H1 (cell line): ENCODE measurements at regions of chr2 and their contacts with region 1.

Region 1: DNA sequence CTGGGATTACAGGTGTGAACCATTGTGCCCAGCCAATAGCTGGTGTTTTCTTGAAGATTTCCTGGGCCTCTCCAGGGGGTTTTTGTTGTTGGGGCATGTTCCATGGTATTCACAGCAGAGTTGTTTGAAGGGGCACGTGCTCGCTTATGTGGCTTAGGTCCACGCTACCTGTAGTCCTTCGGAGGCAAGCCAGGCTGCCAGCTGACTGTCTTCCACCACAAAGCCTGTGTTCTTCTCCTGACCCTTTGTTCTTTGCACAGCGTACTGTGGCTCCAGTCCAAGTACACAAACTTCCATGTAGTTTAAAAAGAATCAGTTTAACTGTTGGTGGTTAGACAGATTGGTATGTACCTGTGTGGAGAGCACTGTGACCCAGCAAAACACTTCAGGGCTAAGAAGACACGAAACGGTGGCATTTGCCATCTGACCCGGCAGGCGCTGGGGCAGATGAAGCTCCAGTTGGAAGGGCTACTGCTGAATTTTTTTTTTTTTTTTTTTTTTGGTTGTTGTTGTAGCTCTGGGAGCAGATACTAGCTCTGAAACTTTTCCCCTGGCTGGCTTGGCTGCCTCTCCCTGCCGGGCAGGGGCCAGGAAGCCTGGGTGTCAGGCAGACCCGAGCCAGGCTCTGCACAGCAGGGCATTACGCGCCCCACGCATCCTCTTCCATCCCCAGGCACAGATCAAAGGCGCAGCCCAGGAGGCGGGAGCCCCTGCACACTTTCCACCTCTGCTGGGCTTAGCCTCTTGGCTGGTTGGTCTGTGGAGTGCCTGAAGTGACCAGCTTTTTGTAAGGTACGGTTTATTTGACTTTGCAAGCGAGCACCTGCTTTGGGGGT is 5.7 kb downstream of the GREB1 start:
- DNase-seq: no peak
- H3K4me3 ChIP-seq: no peak overlapping the region
- H3K27ac ChIP-seq: no peak overlapping the region
- H3K4me1 ChIP-seq: peaks cover 13 to 38% (median 28%) of the 10 kb centered on the region in 4 experiments
- H3K27me3 ChIP-seq: no peaks in the 10 kb centered on the region
- CTCF ChIP-seq: no peak
- EP300 ChIP-seq: no peak
- POLR2A ChIP-seq: no peak
- RAD21 ChIP-seq: no peak

Region 2: GRCh38 chr2:11368059-11368572 is 171.4 kb before region 1 on chr2:
- CTCF ChIA-PET with region 1: no interaction called
- POLR2A ChIA-PET with region 1: no interaction called
- DNase-seq: no peak
- H3K4me3 ChIP-seq: no peak overlapping the region
- H3K27ac ChIP-seq: no peak overlapping the region
- H3K4me1 ChIP-seq: 0 out of 7 replicates have a peak, but pooled peaks cover 0 to 3% (median 0%) of the 10 kb centered on the region in 4 experiments
- H3K27me3 ChIP-seq: no peaks in the 10 kb centered on the region
- CTCF ChIP-seq: no peak
- EP300 ChIP-seq: no peak
- POLR2A ChIP-seq: no peak
- RAD21 ChIP-seq: no peak

Region 3: GRCh38 chr2:11477994-11478393 is 61.5 kb before region 1 on chr2:
- CTCF ChIA-PET with region 1: interaction called, 15 read pairs
- POLR2A ChIA-PET with region 1: no interaction called
- DNase-seq: peak in 1 of 2 experiments; percentile 95
- H3K4me3 ChIP-seq: no peak overlapping the region
- H3K27ac ChIP-seq: no peak overlapping the region
- H3K4me1 ChIP-seq: peaks cover 0 to 3% (median under 1%) of the 10 kb centered on the region in 4 experiments; a peak in 3 of 7 replicates
- H3K27me3 ChIP-seq: peaks cover 0 to 16% (median 12%) of the 10 kb centered on the region in 4 experiments; a peak in 6 of 7 replicates
- CTCF ChIP-seq: peak; percentile 45 to 90 (median 78)
- EP300 ChIP-seq: no peak
- POLR2A ChIP-seq: no peak
- RAD21 ChIP-seq: peak; percentile 86 to 90

Region 4: DNA sequence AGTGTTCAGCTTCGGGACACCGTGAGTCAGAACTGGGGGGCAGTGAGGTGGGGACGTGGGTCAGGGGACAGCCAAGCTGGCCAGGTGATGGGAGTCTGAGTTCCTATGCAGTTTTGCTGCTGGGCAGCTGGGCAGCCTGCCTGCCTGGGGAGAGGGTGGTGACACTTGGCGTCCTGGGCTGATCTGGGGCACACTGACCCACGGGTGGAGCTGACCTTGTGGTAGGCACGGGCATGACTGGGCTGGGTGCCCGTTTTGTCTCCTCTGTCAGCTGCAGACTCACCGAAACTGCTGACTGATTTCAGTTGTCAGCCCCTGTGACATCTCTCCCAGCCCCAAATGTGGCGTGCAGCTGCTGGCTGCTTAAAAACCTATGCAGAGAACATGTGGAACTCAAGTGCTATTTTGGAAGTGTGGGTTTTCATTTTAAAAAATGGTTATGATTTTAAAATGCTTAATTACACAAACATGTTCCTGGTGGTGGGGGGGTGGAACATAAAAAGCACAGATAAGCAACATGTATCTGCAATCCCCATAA is 40.9 kb before region 1 on chr2:
- CTCF ChIA-PET with region 1: interaction called, 31 read pairs
- POLR2A ChIA-PET with region 1: no interaction called
- DNase-seq: no peak
- H3K4me3 ChIP-seq: no peak overlapping the region
- H3K27ac ChIP-seq: no peak overlapping the region
- H3K4me1 ChIP-seq: peaks cover 5 to 18% (median 10%) of the 10 kb centered on the region in 4 experiments
- H3K27me3 ChIP-seq: no peaks in the 10 kb centered on the region
- CTCF ChIP-seq: no peak
- EP300 ChIP-seq: no peak
- POLR2A ChIP-seq: no peak
- RAD21 ChIP-seq: no peak

Region 5: DNA sequence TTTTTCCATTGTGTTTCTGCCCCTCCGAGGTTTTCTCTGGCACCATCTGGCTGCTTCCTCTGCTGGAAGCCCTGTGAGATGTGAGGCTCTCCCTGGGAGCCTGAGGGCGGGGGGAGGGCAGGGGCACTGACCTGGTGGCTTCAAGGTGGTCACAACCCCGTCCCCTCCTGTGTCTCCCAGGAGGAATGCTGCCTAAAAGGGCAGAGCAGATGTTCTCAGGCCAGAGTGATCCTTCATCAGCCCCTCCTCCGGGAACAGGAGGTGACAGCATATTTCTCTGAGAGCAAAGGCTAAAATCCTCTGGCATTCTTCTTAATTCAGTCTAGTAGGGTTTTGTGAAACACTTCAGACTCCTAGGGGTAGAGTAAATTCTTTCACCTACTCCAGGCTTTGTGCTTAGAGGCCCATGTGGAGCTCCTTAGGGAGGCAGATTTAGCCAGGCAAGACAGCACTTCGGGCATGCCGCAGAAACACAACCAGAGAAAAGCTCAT is 24.0 kb before region 1 on chr2:
- CTCF ChIA-PET with region 1: interaction called, 27 read pairs
- POLR2A ChIA-PET with region 1: interaction called, 4 read pairs
- DNase-seq: no peak
- H3K4me3 ChIP-seq: no peak overlapping the region
- H3K27ac ChIP-seq: 0 out of 2 replicates have a peak overlapping the region, but pooled peaks have one; percentile 27
- H3K4me1 ChIP-seq: peaks cover 1 to 13% (median 12%) of the 10 kb centered on the region in 4 experiments; a peak in 5 of 7 replicates
- H3K27me3 ChIP-seq: no peaks in the 10 kb centered on the region
- CTCF ChIP-seq: no peak
- EP300 ChIP-seq: no peak
- POLR2A ChIP-seq: no peak
- RAD21 ChIP-seq: no peak

Region 6: DNA sequence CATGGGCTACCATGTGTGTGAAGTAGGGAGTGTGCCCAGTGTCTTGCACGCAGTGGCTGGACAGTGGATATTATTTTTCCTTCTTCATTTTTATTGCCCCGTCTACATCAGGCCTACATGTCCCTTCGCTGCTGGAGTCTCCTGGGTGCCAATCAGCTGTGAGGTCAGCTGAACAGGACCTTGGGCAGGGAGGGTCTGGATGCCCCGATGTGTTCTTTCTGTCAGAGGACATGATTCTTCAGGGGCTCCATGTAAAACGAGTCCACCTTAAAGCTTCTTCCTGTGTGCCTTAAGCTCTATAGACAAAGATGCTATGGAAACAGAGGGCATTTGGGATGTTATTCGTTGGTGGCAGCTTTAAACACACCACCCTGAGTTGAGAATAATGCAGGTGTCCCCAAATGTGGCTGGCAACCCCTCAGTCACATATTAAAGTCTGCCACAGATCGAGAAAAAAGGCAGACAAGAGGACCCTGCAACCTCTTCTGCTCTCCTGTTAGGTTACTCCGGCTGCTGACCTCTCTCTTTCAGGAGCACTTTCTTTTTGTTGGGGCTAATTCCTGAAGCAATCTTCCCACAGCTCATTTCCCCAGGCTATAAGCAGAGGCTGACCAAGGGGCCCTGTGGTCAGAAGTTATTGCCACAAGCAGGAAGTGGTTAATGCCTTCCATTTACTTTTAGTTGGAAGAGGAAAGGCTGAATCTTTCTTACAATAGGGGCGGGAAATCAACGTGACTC is 14.3 kb after region 1 on chr2:
- CTCF ChIA-PET with region 1: interaction called, 46 read pairs
- POLR2A ChIA-PET with region 1: interaction called, 5 read pairs
- DNase-seq: no peak
- H3K4me3 ChIP-seq: no peak overlapping the region
- H3K27ac ChIP-seq: no peak overlapping the region
- H3K4me1 ChIP-seq: peaks cover 4 to 9% (median 6%) of the 10 kb centered on the region in 4 experiments
- H3K27me3 ChIP-seq: no peaks in the 10 kb centered on the region
- CTCF ChIP-seq: no peak
- EP300 ChIP-seq: no peak
- POLR2A ChIP-seq: no peak
- RAD21 ChIP-seq: no peak

Region 7: DNA sequence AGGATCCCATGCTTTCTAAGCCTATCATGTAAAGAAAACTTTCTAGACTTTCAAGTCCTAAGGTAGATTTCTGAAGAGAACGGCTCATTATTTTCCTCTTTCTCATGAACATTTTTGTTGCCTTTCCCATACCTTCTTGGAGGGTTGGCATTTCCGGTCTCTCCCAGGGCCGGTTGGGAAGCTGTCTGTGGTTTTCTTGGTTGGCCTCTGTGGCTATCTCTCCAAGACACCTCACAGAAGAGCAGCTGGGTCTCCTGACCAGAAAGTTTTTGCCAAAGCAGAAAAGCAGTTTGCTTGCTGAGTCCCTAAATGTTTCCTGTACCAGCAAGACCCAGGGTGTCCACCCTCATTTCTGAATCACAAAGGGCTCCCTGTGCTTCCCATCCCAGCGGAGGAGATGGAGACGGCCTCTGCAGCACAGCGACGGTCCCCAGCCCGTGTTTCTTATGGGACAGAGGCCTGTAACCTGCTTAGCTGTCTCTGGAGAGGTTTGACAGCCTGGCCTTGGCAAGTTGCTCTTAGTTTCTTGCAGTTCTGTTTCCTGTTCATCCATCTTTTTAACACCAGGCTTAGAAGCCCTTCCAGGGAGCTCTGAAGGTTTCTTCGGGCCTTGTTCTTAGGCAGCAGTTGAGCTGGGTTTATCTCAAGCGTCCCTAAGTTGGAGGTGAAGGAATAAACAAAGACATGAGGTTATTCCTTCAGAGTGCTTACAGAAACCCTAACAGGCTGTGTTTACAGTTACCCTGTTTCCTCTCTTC is 34.1 kb after region 1 on chr2:
- CTCF ChIA-PET with region 1: interaction called, 377 read pairs
- POLR2A ChIA-PET with region 1: interaction called, 3 read pairs
- DNase-seq: no peak
- H3K4me3 ChIP-seq: no peak overlapping the region
- H3K27ac ChIP-seq: no peak overlapping the region
- H3K4me1 ChIP-seq: peaks cover 3 to 13% (median 11%) of the 10 kb centered on the region in 4 experiments
- H3K27me3 ChIP-seq: no peaks in the 10 kb centered on the region
- CTCF ChIP-seq: no peak
- EP300 ChIP-seq: no peak
- POLR2A ChIP-seq: no peak
- RAD21 ChIP-seq: no peak